ENCODE measurements at regions of chr17 and their contacts with region 1.

Region 1: GRCh38 chr17:41824086-41824485 is 11.3 kb downstream of the FKBP10 start:
- DNase-seq: no peak
- ATAC-seq: no peak
- H3K4me3 ChIP-seq: no peak overlapping the region
- H3K27ac ChIP-seq: no peak overlapping the region
- H3K4me1 ChIP-seq: no peaks in the 10 kb centered on the region
- H3K27me3 ChIP-seq: no peaks in the 10 kb centered on the region
- CTCF ChIP-seq: no peak
- POLR2A ChIP-seq: no peak

Region 2: GRCh38 chr17:41769985-41770594 is 54.0 kb before region 1 on chr17:
- intact Hi-C with region 1: no loop called
- DNase-seq: no peak
- ATAC-seq: no peak
- H3K4me3 ChIP-seq: no peak overlapping the region
- H3K27ac ChIP-seq: peak overlapping the region in 3 of 12 donors; percentile 7 to 96 (median 27)
- H3K4me1 ChIP-seq: peaks cover 3 to 41% (median 31%) of the 10 kb centered on the region in 12 donors
- H3K27me3 ChIP-seq: no peaks in the 10 kb centered on the region
- CTCF ChIP-seq: no peak
- POLR2A ChIP-seq: no peak

Region 3: GRCh38 chr17:41885733-41886132 is 61.6 kb after region 1 on chr17:
- intact Hi-C with region 1: loop called in 2 of 10 experiments (anchors 10 kb)
- DNase-seq: no peak
- ATAC-seq: no peak
- H3K4me3 ChIP-seq: no peak overlapping the region
- H3K27ac ChIP-seq: no peak overlapping the region
- H3K4me1 ChIP-seq: no peaks in the 10 kb centered on the region
- H3K27me3 ChIP-seq: no peaks in the 10 kb centered on the region
- CTCF ChIP-seq: peak in 5 of 12 donors; percentile 3 to 31 (median 14)
- POLR2A ChIP-seq: no peak

Region 4: GRCh38 chr17:42120770-42121769 is 297.0 kb after region 1 on chr17 and contains the start of gene KAT2A:
- intact Hi-C with region 1: no loop called
- DNase-seq: peak; percentile 83 to 91 (median 86)
- ATAC-seq: peak; percentile 73 to 93 (median 92)
- H3K4me3 ChIP-seq: peak within 1 kb of the TSS; percentile 43 to 97 (median 78)
- H3K27ac ChIP-seq: peak within 1 kb of the TSS in 11 of 12 donors; percentile 24 to 80 (median 71)
- H3K4me1 ChIP-seq: peaks cover 0 to 29% (median 16%) of the 10 kb centered on the region in 12 donors
- H3K27me3 ChIP-seq: no peaks in the 10 kb centered on the region
- CTCF ChIP-seq: no peak
- POLR2A ChIP-seq: peak in 1 of 2 donors; percentile 51
- total RNA-seq, gene KAT2A: 6.9 to 17.6 (median 14.8) TPM